Activated T-helper 1 cell treated with anti-CD3 and anti-CD28 coated beads, Interleukin-12 subunit alpha, Interleukin-12 subunit beta, Interleukin-2, Interleukin-4 antibody, amounts not matched to agents 30 ng/mL and 10 ng/mL and 1 ng/mL, durations not matched to agents 14 hours and 24 hours and 36 hours (primary cell): ENCODE measurements at regions of chr1 and their contacts with region 1.

Region 1: GRCh38 chr1:110619412-110620249 is 13.5 kb upstream of the KCNA2 start:
- DNase-seq: peak; percentile 87
- H3K4me3 Mint-ChIP-seq: peak overlapping the region; percentile 83
- H3K27ac Mint-ChIP-seq: peak overlapping the region; percentile 90
- H3K4me1 Mint-ChIP-seq: peaks cover 63% of the 10 kb centered on the region
- H3K27me3 Mint-ChIP-seq: peaks cover 4% of the 10 kb centered on the region

Region 2: GRCh38 chr1:109412551-109412950 is 1207.1 kb before region 1 on chr1:
- intact Hi-C with region 1: no loop called
- DNase-seq: no peak
- H3K4me3 Mint-ChIP-seq: no peak overlapping the region
- H3K27ac Mint-ChIP-seq: no peak overlapping the region
- H3K4me1 Mint-ChIP-seq: peaks cover 29% of the 10 kb centered on the region
- H3K27me3 Mint-ChIP-seq: no peaks in the 10 kb centered on the region

Region 3: GRCh38 chr1:110338886-110339406 is 280.7 kb before region 1 on chr1 and contains the start of gene RBM15:
- intact Hi-C with region 1: no loop called
- DNase-seq: peak; percentile 98
- H3K4me3 Mint-ChIP-seq: no peak within 1 kb of the TSS
- H3K27ac Mint-ChIP-seq: peak within 1 kb of the TSS; percentile 98
- H3K4me1 Mint-ChIP-seq: peaks cover 54% of the 10 kb centered on the region
- H3K27me3 Mint-ChIP-seq: no peaks in the 10 kb centered on the region
- total RNA-seq, gene RBM15: 58.5 and 59.0 TPM in 2 replicates

Region 4: DNA sequence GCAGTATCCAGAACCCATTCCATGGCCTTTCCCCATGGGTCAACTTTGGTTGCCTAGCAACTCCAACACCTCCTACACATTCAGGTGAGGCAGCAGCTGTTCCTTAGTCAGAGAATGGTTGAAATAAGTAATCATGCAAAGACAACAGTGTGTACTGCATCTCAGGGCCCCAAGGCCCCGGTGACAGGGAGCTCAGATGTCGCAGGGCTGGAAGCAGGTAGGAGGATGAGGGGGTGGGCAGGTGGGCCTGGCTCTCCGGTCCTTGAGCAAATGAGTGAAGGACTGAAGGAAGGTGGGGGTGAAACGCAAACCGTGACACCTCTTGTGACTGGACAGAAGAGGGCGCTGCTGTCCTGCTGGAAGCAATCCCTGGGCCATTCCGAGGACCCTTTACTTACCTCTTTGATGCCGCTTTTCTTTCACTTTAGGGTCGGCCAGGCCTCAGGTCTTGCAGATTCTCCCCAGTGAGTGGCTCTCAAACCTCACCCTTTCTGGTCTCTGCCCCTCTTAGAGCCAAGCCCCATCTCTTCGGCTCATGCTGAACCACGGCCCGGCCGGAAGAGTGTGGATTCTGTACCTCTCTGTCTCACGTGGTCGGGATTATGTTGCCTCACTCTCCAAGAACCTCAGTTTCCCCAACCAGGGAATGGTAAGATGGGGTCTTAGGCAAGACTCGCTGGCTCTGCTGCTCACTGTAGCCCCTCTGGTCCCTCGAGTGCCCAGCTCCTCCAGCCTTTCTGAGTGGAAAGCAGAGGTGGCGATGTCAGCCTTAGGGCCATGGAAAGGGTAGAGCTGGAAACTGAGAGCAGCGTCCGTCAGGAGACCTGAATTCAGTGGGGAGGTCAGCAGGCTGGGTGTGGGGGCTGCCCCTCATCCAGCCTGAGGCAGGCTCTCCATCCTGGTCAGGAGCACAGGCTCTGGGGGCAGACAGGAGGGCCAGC is 95.0 kb before region 1 on chr1:
- intact Hi-C with region 1: loop called (anchors 1 kb)
- DNase-seq: peak; percentile 28
- H3K4me3 Mint-ChIP-seq: no peak overlapping the region
- H3K27ac Mint-ChIP-seq: no peak overlapping the region
- H3K4me1 Mint-ChIP-seq: peaks cover 7% of the 10 kb centered on the region
- H3K27me3 Mint-ChIP-seq: peaks cover 25% of the 10 kb centered on the region

Region 5: GRCh38 chr1:110630839-110631663 is 11.4 kb after region 1 on chr1:
- intact Hi-C with region 1: loop called (anchors 1 kb)
- DNase-seq: peak; percentile 84
- H3K4me3 Mint-ChIP-seq: no peak overlapping the region
- H3K27ac Mint-ChIP-seq: no peak overlapping the region
- H3K4me1 Mint-ChIP-seq: peaks cover 67% of the 10 kb centered on the region
- H3K27me3 Mint-ChIP-seq: no peaks in the 10 kb centered on the region

Region 6: DNA sequence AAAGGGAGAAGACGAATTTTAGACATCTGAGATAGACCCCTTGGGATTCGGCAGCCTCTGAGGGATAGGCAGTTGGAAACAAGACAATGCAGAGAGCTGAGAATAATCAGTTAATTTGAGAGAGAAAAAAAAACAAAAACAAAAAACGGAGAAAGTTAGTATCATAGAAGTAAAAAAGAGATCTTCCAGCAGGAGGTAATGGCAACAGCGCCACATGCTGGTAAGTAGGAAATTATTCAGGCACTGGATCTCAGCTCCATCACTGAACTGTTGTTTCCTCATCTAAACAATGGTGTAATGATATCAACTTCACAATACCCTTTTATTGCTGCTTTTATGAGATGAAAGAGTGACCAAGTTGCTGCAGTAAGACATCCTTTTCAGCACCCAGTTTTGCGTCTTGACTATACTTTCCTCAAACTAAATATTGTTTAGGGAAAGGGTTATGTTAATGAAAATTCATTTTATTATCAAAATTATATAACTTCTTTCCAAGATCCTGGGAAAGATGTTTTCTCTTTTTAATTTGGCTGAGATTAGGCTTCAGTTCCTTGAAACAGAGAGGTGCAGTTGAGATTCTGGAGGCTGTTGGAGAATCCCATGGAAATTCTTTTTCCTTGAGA is 146.5 kb after region 1 on chr1:
- intact Hi-C with region 1: loop called (anchors 1 kb)
- DNase-seq: peak; percentile 34
- H3K4me3 Mint-ChIP-seq: no peak overlapping the region
- H3K27ac Mint-ChIP-seq: no peak overlapping the region
- H3K4me1 Mint-ChIP-seq: peaks cover 14% of the 10 kb centered on the region
- H3K27me3 Mint-ChIP-seq: peaks cover 17% of the 10 kb centered on the region